ENCODE measurements at regions of chr2 and their contacts with region 1.

Region 1: GRCh38 chr2:38602732-38603401 is at the start of gene HNRNPLL:
- DNase-seq: peak; percentile 92 to 94 (median 92)
- H3K4me3 ChIP-seq: peak within 1 kb of the TSS; percentile 64 to 71
- H3K4me3 Mint-ChIP-seq: peak within 1 kb of the TSS; percentile 96 to 98 (median 98)
- H3K27ac ChIP-seq: peak within 1 kb of the TSS; percentile 89
- H3K27ac Mint-ChIP-seq: peak within 1 kb of the TSS; percentile 81 to 99 (median 97)
- H3K4me1 ChIP-seq: peaks cover 46% of the 10 kb centered on the region
- H3K4me1 Mint-ChIP-seq: peaks cover 28 to 51% (median 40%) of the 10 kb centered on the region in 4 donors
- H3K27me3 ChIP-seq: no peaks in the 10 kb centered on the region
- H3K27me3 Mint-ChIP-seq: peaks cover 0 to 2% of the 10 kb centered on the region in 2 donors
- total RNA-seq, gene HNRNPLL: 103 to 105 TPM

Region 2: DNA sequence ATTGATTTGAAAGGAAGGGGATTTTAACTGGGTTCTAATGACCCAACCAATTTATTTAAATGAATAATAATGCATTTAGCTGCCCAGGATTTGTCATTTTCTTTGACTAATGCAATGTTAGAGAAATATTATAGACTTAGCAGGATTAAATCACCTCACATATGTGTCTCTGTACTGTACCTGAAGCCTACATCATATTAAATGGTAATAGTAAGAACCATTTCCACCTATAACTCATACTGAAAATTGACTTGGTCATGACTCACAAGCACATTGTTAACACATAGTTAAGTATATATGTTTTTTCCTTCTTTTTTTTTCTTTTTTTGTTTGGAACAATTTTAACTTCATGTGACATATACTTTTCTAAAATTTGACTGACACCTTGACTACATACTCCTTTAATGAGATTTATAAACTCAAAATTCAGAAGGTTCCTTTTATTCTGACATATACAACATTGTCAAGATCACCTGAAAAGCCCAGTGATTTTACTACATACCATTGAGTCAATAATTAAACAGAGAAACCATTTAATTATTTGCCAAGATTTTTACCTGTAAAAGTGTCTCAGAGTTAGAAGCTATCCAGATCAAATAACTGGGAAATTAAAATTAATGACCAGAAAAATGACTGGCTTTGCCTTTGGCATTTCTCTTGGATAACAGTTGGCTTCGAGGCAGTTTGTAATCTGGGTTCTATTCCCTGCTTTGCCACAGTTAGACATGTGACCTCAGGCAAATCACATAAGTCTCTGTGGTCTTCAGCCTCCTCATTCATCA is 872.6 kb before region 1 on chr2:
- CTCF ChIA-PET with region 1: no interaction called
- POLR2A ChIA-PET with region 1: no interaction called
- intact Hi-C with region 1: no loop called
- DNase-seq: no peak
- H3K4me3 ChIP-seq: no peak overlapping the region
- H3K4me3 Mint-ChIP-seq: no peak overlapping the region
- H3K27ac ChIP-seq: no peak overlapping the region
- H3K27ac Mint-ChIP-seq: no peak overlapping the region
- H3K4me1 ChIP-seq: no peaks in the 10 kb centered on the region
- H3K4me1 Mint-ChIP-seq: no peaks in the 10 kb centered on the region
- H3K27me3 ChIP-seq: no peaks in the 10 kb centered on the region
- H3K27me3 Mint-ChIP-seq: no peaks in the 10 kb centered on the region

Region 3: DNA sequence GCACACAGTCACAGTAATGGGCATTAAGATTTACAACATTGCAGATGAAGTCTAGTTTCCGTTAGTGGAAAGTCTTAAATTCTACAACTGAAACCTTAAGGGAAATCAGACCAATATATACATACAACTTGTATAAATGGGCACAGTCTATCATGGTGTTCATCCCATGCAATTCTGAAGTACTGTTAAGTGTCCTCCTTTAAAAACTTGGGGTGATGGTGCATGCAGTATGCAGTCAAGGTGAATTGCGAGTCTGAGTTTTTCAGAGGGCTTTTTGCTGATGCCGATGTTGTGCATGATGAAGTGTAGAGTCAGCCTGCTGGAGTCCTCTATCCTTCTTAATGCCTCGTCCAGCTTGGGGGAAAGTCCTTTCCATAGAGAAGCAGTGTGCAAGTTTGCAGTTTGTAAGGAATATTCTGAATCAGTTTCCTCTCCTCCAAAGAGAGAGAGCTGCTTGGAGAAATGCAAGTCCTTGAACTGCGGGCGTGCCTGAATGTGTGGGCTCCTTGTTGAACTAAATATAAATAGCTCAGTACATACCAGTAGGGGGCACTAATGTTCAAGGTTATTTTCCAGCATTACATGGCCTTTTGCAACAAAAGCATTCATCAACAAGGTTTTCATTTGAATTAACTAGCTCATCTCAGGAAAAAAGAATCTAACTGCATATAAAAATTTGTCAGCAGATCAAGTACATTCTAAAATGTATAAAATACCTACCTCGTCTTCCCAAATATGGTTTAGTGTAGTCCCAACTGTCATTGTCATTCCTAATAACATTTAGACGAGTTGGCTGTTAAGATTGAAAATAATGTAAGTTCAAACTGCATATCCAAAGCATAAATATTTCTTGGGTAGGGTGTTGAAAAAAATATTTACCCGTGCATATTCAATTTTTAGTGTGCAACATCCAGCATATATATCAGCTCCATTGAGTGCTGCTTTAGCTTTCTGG is 21.4 kb before region 1 on chr2:
- CTCF ChIA-PET with region 1: interaction called, 268 read pairs
- POLR2A ChIA-PET with region 1: interaction called, 332 read pairs
- intact Hi-C with region 1: loop called (anchors 1 kb)
- DNase-seq: peak; percentile 62 to 82 (median 81)
- H3K4me3 ChIP-seq: no peak overlapping the region
- H3K4me3 Mint-ChIP-seq: peak overlapping the region in 1 of 8 donors; percentile 22
- H3K27ac ChIP-seq: no peak overlapping the region
- H3K27ac Mint-ChIP-seq: peak overlapping the region in 5 of 7 donors; percentile 41 to 65 (median 62)
- H3K4me1 ChIP-seq: peaks cover 51% of the 10 kb centered on the region
- H3K4me1 Mint-ChIP-seq: peaks cover 26 to 64% (median 41%) of the 10 kb centered on the region in 4 donors
- H3K27me3 ChIP-seq: no peaks in the 10 kb centered on the region
- H3K27me3 Mint-ChIP-seq: no peaks in the 10 kb centered on the region

Region 4: DNA sequence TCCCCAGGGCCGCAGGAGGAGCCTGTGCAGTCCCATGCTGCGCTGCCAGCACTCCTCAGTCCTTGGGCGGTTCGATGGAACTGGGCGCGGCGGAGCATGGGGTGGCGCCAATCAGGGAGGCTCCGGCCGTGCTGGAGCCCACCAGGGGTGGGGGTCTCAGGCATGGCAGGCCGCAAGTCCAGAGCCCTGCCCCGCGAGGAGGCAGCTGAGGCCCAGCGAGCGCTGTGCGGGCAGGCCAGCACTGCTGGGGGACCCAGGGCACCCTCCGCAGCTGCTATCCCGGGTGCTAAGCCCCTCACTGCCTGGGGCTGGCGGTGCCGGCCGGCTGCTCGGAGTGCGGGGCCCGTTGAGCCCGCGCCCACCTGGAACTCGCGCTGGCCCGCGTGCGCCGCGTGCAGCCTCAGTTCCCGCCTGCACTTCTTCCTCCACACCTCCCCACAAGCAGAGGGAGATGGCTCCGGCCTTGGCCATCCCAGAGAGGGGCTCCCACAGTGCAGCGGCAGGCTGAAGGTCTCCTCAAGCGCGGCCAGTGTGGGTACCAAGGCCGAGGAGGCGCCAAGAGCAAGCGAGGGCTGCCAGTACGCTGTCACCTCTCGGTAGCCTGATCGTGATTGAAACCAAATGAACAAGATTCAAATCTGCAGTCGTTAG is 40.3 kb after region 1 on chr2:
- CTCF ChIA-PET with region 1: interaction called, 15 read pairs
- POLR2A ChIA-PET with region 1: interaction called, 9 read pairs
- intact Hi-C with region 1: no loop called
- DNase-seq: peak in 1 of 5 donors; percentile 5
- H3K4me3 ChIP-seq: peak overlapping the region in 1 of 2 donors; percentile 12
- H3K4me3 Mint-ChIP-seq: peak overlapping the region in 6 of 8 donors; percentile 68 to 89 (median 77)
- H3K27ac ChIP-seq: peak overlapping the region; percentile 51
- H3K27ac Mint-ChIP-seq: peak overlapping the region; percentile 73 to 97 (median 95)
- H3K4me1 ChIP-seq: peaks cover 30% of the 10 kb centered on the region
- H3K4me1 Mint-ChIP-seq: peaks cover 17 to 39% (median 26%) of the 10 kb centered on the region in 4 donors
- H3K27me3 ChIP-seq: no peaks in the 10 kb centered on the region
- H3K27me3 Mint-ChIP-seq: no peaks in the 10 kb centered on the region

Region 5: GRCh38 chr2:38672445-38673391 is 69.9 kb after region 1 on chr2:
- CTCF ChIA-PET with region 1: interaction called, 148 read pairs
- POLR2A ChIA-PET with region 1: interaction called, 227 read pairs
- intact Hi-C with region 1: loop called (anchors 1 kb)
- DNase-seq: no peak
- H3K4me3 ChIP-seq: no peak overlapping the region
- H3K4me3 Mint-ChIP-seq: peak overlapping the region in 6 of 8 donors; percentile 4 to 73 (median 28)
- H3K27ac ChIP-seq: no peak overlapping the region
- H3K27ac Mint-ChIP-seq: peak overlapping the region; percentile 57 to 93 (median 87)
- H3K4me1 ChIP-seq: peaks cover 87% of the 10 kb centered on the region
- H3K4me1 Mint-ChIP-seq: peaks cover 47 to 86% (median 67%) of the 10 kb centered on the region in 4 donors
- H3K27me3 ChIP-seq: no peaks in the 10 kb centered on the region
- H3K27me3 Mint-ChIP-seq: no peaks in the 10 kb centered on the region

Region 6: GRCh38 chr2:38702413-38702812 is 99.5 kb after region 1 on chr2:
- CTCF ChIA-PET with region 1: interaction called, 25 read pairs
- POLR2A ChIA-PET with region 1: interaction called, 71 read pairs
- intact Hi-C with region 1: no loop called
- DNase-seq: no peak
- H3K4me3 ChIP-seq: no peak overlapping the region
- H3K4me3 Mint-ChIP-seq: peak overlapping the region in 6 of 8 donors; percentile 51 to 71 (median 64)
- H3K27ac ChIP-seq: peak overlapping the region; percentile 41
- H3K27ac Mint-ChIP-seq: peak overlapping the region; percentile 84 to 97 (median 94)
- H3K4me1 ChIP-seq: peaks cover 88% of the 10 kb centered on the region
- H3K4me1 Mint-ChIP-seq: peaks cover 45 to 77% (median 62%) of the 10 kb centered on the region in 4 donors
- H3K27me3 ChIP-seq: no peaks in the 10 kb centered on the region
- H3K27me3 Mint-ChIP-seq: no peaks in the 10 kb centered on the region

Region 7: DNA sequence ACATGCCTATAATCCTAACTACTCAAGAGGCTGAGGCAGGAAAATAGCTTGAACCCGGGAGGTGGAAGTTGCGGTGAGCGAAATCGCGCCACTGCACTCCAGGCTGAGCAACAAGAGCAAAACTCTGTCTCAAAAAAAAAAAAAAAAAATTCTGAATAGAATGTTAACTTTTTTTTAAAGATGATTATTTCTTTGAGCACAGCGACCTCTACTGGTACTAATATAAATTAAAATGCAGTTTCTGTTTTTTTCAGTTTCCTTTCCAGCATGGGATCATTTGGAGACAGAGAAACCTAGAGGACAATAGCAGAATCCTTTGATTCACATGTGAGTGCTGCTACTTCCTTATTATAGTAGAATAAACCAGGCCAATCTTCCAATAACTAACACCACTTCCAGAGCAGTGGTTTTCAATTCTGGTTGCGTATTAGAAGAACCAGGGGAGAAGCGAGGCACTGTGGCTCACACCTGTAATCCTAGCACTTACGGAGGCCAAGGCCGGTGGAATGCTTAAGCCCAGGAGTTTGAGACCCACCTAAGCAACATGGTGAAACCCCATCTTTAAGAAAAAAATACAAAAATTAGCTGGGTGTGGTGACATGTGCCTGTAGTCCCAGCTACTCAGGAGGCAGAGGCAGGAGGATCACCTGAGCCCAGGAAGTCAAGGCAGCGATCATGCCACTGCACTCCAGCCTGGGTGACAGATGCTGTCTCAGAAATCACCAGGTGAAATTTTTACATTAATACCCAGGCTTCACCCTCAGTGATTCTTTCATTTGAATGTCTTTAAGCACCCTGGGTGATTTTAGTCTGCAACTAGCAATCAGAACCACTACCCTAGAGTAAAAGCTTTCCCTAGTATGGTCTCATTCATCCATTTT is 138.2 kb after region 1 on chr2:
- CTCF ChIA-PET with region 1: interaction called, 9 read pairs
- POLR2A ChIA-PET with region 1: interaction called, 327 read pairs
- intact Hi-C with region 1: loop called (anchors 5 kb)
- DNase-seq: peak; percentile 60 to 71 (median 65)
- H3K4me3 ChIP-seq: no peak overlapping the region
- H3K4me3 Mint-ChIP-seq: peak overlapping the region in 4 of 8 donors; percentile 15 to 39 (median 27)
- H3K27ac ChIP-seq: no peak overlapping the region
- H3K27ac Mint-ChIP-seq: peak overlapping the region; percentile 30 to 99 (median 83)
- H3K4me1 ChIP-seq: peaks cover 54% of the 10 kb centered on the region
- H3K4me1 Mint-ChIP-seq: peaks cover 31 to 78% (median 44%) of the 10 kb centered on the region in 4 donors
- H3K27me3 ChIP-seq: no peaks in the 10 kb centered on the region
- H3K27me3 Mint-ChIP-seq: no peaks in the 10 kb centered on the region